ENCODE measurements at regions of chr21 and their contacts with region 1.

Region 1: DNA sequence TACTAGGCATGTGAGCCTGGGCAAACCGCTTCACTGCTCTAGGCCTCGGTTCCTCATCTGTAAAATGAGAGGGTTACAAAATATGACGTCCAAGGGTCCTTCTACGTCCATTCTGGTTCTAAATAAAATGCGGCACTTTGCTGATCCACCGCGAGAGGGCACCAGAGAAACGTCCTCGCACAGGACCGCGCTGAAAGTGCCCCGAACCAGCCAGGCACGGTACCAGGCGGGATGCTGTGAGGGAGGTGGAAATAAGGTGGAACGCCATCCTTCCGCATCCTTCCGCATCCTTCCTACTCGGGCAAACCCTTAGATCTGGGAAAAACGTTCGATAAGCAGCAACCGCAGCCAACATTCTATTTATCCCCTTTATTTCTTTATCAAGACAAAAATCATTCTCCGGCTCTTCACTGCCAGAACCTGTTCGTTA is 60.3 kb upstream of the KRTAP19-8 start:
- DNase-seq: peak; percentile 59 to 92 (median 82)

Region 2: DNA sequence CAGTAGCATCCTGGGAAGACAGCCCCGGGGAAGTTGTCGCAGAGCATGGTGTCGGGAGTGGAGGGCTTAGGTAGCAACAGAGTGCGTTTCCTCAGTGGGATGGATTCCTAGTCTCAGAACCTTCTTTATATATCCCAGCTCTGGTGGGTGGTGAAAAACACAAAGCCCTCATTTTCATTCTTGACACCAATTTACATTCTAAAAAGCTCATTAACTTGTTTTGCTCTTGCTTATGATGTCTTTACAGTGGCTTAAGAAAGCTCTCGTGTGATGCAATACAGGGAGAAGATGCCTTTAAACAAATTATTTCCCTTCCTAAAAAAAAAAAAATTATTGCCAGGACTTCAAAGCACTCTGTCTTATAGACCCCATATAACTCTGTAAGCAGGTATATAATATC is 285.4 kb before region 1 on chr21 and contains the start of gene KRTAP8-1:
- intact Hi-C with region 1: no loop called
- DNase-seq: no peak

Region 3: DNA sequence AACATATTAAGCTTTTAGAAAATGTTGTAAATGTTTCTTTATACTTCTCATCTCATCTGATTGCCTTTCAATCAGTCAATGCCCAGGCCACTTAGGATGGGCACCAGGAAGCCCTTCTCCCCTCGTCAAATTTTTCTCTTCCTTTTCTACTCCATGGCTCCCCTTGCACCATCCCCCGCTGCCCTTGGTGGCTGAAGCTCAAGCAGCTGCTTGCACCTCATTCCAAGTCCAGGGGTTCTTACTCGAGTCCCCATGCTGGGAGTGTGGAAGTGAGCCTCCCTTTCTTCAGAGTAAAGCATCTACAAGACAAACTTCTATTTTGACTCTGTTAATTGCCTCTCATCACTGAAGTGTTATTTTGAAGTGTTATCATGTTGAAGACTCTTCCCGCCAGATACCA is 177.5 kb before region 1 on chr21:
- intact Hi-C with region 1: no loop called
- DNase-seq: no peak

Region 4: DNA sequence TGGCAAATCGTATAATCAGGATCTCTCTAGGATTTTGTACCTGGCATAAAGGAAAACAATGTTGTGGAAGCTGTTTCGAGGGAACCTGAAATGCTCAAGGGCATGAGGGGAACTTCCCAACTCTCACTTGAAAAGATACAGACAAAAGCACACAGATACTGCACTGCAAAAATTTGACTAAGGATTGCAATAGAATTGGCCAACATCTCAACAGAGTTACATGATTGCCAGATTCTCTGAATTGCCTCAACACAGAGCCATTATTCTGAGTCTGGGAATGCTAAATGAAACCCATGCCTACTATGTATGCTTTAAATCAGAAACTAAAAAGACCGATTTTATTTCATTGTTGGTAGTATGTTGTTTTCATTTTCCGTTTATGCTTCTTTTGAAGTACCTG is 76.3 kb before region 1 on chr21:
- intact Hi-C with region 1: no loop called
- DNase-seq: no peak

Region 5: DNA sequence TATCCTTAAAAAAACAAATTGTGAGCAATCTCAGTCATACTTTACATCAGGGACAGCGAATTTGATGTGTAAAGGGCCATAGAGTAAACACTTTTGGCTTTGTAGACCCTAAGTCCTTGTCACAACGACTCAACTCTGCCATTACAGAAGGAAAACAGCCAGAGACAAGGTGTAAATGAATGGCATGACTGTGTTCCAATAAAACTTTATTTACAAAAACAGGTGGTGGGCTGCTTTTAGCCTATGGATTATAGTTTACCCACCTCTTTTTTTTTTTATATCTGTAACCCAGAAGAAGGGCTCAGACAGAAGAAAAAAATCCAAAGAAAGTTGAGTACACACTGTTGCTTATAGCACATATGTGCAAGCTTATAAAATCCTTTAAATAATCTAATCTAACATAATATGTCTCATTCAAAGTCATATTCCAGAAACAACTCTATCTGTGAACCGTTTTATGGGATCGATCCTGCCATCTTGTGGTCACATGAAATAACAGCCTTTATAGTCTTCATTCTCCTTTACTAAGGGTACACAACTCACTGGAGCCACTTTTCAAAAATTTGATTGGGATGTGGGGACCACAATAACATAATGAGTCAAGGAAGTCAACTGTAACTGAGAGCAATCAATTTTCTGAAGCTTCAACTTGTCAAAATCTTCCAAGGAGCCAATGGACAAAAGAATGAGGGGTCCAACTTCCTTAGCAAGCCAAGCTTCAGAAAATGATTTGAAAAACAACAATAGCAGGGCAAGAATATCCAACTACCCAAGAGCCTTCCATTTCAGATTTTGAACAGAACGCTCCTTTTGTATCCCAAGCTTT is 81.9 kb after region 1 on chr21:
- intact Hi-C with region 1: loop called (anchors 5 kb)
- DNase-seq: peak in 15 of 42 donors; percentile 22 to 80 (median 51)

Region 6: GRCh38 chr21:31604591-31605190 is 506.1 kb after region 1 on chr21:
- intact Hi-C with region 1: loop called (anchors 10 kb)
- DNase-seq: peak; percentile 47 to 92 (median 78)

Measured in head of caudate nucleus (tissue), 42 donors.